HEK293T (cell line): ENCODE measurements at regions of chr12 and their contacts with region 1.

Region 1: GRCh38 chr12:6965026-6965661 is 5.3 kb downstream of the PHB2 start:
- DNase-seq: peak; percentile 81

Region 2: GRCh38 chr12:6867413-6868210 is 97.5 kb before region 1 on chr12 and contains the start of gene TPI1:
- CTCF ChIA-PET with region 1: interaction called, 15 read pairs
- POLR2A ChIA-PET with region 1: interaction called, 23 read pairs
- DNase-seq: peak; percentile 91

Region 3: DNA sequence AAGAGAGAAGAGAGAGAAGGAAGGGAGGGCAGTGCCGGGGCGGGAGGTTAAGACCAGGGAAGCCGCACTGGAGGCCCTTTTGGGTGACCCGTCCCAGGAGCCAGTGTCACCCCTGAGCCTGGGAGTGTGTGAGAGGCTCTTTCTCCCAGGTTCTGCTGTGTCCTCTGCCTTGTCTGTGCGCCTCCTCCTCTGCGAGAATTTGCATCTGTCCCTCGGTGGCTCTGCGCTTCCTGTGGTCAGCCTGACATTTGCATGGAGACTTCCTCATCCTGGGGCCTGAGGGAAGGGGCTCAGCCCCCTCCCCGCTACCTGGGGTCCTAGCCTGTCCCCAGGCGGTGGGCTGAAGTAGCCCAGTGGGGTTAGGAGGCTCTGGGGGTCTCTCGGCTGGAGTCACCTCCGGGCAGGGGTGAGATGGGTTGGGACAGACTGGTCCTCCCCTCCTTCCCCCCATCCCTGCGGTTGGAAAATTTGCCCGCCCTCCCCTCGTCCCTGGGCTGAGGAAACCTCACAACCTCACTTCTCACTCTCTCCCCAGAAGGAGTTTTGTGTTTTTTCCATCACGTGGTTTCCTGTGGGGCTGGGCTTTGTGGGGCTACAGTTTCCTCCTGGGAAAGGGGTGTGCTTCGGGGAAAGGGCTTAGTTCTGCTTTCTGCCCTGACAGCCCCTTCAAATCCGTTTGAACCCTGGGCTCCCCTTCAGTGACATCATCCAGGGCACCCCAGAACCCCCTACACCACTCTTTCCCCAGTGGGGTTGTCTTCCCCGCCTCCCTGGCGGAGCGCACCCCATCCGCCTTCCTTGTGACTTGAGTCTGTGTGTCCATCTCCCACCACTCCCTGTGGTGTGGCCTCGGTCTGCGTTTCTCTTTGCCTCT is 11.5 kb before region 1 on chr12:
- CTCF ChIA-PET with region 1: interaction called, 5 read pairs
- POLR2A ChIA-PET with region 1: interaction called, 450 read pairs
- DNase-seq: no peak

Region 4: GRCh38 chr12:6975297-6976027 is 10.3 kb after region 1 on chr12:
- CTCF ChIA-PET with region 1: interaction called, 6 read pairs
- POLR2A ChIA-PET with region 1: interaction called, 15 read pairs
- DNase-seq: no peak